GM10248 (cell line): ENCODE measurements at regions of chr17 and their contacts with region 1.

Region 1: DNA sequence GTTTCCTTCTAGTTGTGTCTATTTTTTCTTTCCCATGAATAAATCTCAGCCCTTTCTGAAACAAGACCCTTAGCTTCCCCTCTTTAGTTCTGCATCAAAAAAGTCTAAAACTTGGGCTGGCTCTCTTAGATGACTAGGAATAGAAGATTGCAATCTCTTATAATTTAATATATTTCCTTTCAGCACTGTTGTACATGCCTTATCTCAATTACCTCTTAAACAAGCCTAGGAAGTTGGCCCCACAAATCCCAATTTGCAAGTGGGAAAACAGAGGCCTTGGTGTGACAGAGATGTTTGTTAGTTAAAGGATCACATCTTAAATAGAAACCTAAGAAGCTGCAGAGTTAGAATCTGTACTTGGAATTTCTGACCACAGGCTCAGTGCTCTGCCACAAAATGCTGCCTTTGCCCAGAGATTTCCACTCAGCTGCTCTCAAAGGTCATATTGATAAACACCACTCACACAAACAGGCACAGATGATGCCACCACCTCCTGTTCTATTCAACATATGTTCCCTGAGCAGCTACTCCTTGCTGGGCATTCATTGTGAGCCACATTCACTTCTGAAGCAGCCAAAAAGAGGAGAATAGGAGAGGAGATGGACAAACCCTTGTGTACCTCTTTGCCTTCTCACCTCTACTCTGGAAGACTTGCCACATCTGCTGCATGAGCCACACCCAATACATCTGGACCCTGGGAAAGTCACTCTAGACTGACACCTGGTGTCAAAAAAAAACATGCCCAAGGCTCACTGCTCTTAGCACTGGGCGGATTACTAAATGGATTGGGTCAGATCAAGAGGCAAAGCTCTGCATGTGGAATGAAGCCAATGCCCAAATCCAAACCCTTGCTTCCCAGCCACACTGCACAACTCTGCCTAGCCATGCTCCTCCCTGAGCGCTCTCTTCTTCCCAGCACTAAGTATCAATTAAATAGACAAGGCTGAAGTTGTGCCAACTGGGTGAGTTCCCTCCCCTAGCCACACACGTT is 5.4 kb downstream of the CCDC182 start:
- DNase-seq: peak; percentile 51
- CTCF ChIP-seq: peak; percentile 49

Region 2: GRCh38 chr17:57724026-57724728 is 15.5 kb before region 1 on chr17:
- CTCF ChIA-PET with region 1: interaction called, 14 read pairs
- POLR2A ChIA-PET with region 1: no interaction called
- DNase-seq: peak; percentile 60
- CTCF ChIP-seq: no peak